MCF 10A (cell line): ENCODE measurements at regions of chr4 and their contacts with region 1.

Region 1: DNA sequence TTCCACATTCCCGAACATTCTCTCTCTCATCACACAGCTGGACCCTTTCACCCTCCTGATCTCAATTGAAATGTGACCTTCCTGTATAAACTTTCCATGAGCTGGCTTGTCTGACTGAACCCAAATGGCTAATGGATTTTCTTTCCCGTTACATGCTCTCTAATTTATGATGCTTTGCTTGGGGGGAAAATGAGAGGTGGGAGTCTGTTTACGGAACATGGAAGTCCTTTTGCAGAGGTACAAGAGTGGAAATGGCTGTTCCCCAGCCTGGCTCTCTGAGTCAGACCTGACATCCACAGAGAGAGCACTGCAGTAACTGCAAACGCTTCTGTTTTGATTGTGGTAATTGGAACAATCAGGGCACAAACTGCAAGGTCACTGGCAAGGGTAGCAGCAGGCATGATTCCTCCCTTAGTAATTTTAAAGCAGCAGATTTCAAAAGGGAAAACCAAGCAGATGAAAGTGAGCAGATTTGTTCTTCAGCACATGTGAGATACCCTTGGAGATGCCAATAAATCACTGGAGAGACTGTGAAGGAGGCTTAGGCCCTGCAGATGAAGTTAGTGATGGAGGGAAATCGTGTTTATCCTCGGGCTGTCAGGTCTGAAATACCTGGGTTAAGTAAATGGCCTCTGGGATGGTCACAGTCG is 83.9 kb downstream of the SNCA start:
- DNase-seq: peak; percentile 76
- H3K4me3 Mint-ChIP-seq: peak overlapping the region; percentile 52
- H3K27ac Mint-ChIP-seq: peak overlapping the region; percentile 85
- H3K4me1 Mint-ChIP-seq: peaks cover 23% of the 10 kb centered on the region
- H3K27me3 Mint-ChIP-seq: no peaks in the 10 kb centered on the region
- CTCF ChIP-seq: no peak

Region 2: DNA sequence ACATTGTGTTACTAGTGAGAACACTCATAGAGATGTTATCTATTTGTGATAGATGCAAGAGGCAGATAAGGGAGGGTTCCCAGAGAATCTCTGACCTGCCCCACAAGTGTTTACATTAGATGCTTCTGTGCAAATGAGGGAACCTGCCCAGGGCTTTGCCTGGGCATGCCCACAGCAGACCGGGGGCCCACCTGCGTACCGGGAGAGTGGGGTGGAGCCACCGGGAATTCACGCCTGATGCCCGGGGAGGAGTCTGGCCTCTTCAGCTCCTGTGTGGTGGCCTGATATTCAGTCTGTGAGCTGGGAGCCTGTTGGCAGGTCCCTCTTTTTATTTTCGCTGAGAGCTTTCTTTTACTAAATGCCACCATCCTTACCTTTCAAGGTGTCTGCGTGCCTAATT is 71.8 kb before region 1 on chr4:
- CTCF ChIA-PET with region 1: no interaction called
- POLR2A ChIA-PET with region 1: interaction called, 14 read pairs
- intact Hi-C with region 1: loop called (anchors 1 kb)
- DNase-seq: peak; percentile 82
- H3K4me3 Mint-ChIP-seq: peak overlapping the region; percentile 91
- H3K27ac Mint-ChIP-seq: peak overlapping the region; percentile 94
- H3K4me1 Mint-ChIP-seq: peaks cover 18% of the 10 kb centered on the region
- H3K27me3 Mint-ChIP-seq: no peaks in the 10 kb centered on the region
- CTCF ChIP-seq: no peak

Region 3: GRCh38 chr4:89737888-89738287 is 15.2 kb before region 1 on chr4:
- CTCF ChIA-PET with region 1: interaction called, 3 read pairs
- POLR2A ChIA-PET with region 1: interaction called, 21 read pairs
- intact Hi-C with region 1: no loop called
- DNase-seq: peak; percentile 73
- H3K4me3 Mint-ChIP-seq: no peak overlapping the region
- H3K27ac Mint-ChIP-seq: peak overlapping the region; percentile 67
- H3K4me1 Mint-ChIP-seq: peaks cover 7% of the 10 kb centered on the region
- H3K27me3 Mint-ChIP-seq: no peaks in the 10 kb centered on the region
- CTCF ChIP-seq: no peak